ENCODE measurements at regions of chr17 and their contacts with region 1.

Region 1: DNA sequence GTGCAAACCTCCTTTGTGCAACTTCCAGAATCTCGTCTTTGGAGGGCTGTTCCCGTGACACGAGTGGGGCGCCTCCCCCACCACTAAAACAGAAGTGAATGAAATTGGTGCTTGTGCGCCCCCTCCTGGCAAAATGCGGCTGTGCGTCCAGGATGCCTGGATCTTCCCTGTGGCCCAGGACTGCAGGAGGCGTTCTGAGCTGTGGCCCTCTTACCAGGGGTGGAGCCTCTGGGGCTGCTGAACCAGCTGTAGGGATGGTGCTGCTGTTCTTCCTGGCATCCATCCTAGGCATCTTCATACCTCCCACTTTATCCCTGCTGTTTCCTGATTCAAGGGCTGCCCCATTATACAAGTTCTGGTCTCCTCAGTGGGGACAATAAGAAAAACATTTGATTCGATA is 18.5 kb upstream of the NAGLU start:
- DNase-seq: peak; percentile 70
- H3K4me3 Mint-ChIP-seq: no peak overlapping the region
- H3K27ac Mint-ChIP-seq: no peak overlapping the region
- H3K4me1 Mint-ChIP-seq: no peaks in the 10 kb centered on the region
- H3K27me3 Mint-ChIP-seq: peaks cover 4% of the 10 kb centered on the region

Region 2: DNA sequence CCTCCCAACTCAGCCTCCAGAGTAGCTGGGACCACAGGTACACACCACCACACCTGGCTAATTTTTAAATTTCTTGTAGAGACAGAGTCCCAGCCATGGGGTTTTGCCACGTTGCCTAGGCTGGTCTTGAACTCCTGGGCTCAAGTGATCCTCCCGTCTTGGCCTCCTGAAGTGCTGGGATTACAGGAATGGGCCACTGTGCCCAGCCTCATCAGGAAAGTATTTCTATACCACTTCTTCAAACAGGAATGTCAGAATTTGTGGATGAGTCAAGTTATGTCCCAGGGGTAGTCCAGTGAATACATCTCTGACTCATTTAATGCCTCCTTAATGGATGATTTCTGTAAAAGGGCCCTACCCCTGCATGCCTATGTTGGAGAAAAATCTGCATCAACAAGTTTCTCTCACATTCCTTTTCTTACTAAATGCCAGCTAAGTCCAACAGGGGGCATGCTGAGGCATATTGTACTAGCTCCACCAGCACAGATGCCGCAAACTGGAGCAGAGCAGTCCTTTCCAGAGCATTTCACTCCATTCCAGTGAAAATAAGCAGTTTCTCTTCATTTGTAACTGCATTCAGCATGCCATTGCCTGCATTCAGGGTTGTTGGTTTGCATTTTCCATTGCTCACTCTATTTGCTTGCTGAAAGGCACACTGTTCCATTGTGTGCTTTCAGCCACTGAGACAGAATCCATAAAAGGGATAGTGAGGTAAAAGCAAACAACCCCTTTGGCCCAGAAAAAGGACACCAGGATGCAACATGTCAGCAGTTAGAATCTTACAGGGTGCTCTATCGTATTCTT is 89.2 kb before region 1 on chr17:
- intact Hi-C with region 1: loop called (anchors 1 kb)
- DNase-seq: peak; percentile 16
- H3K4me3 Mint-ChIP-seq: no peak overlapping the region
- H3K27ac Mint-ChIP-seq: no peak overlapping the region
- H3K4me1 Mint-ChIP-seq: no peaks in the 10 kb centered on the region
- H3K27me3 Mint-ChIP-seq: peaks cover 50% of the 10 kb centered on the region

Region 3: DNA sequence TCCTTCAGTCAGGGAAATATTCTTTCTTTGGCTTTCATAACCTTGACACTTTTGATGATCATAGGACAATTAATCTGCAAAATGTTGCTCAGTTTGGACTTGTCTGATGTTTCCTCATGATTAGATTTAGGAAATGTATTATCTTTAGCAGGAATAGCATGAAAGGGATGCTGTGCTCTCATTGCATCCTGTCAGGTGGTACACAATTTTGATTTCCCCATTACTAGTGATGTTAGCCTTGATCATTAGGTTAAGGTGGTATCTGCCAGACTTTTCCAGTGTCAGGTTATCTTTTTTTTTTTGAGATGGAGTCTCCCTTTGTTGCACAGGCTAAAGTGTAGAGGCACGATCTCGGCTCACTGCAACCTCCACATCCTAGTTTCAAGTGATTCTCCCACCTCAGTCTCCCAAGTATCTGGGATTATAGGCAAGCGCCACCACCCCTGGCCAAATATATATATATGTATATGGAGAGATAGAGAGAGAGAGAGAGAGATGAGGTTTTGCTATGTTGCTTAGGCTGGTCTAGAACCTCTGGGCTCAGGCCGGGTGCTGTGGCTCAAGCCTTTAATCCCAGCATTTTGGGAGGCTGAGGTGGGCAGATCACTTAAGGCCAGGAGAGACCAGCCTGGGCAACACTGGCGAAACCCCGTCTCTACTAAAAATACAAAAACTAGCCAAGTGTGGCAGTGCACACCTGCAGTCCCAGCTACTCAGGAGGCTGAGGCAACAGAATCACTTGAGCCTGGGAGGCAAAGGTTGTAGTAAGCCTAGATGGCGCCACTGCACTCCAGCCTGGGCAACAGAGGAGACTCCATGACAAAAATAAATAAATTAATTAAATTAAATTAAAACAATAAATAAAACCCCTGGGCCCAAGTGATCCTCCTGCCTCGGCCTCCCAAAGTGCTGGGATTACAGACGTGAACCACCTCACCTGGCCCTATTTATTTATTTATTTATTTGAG is 78.6 kb before region 1 on chr17:
- intact Hi-C with region 1: loop called (anchors 1 kb)
- DNase-seq: peak; percentile 28
- H3K4me3 Mint-ChIP-seq: no peak overlapping the region
- H3K27ac Mint-ChIP-seq: no peak overlapping the region
- H3K4me1 Mint-ChIP-seq: peaks cover 11% of the 10 kb centered on the region
- H3K27me3 Mint-ChIP-seq: peaks cover 6% of the 10 kb centered on the region

Region 4: GRCh38 chr17:42459256-42459800 is 58.2 kb before region 1 on chr17:
- intact Hi-C with region 1: no loop called
- DNase-seq: peak; percentile 5
- H3K4me3 Mint-ChIP-seq: peak overlapping the region; percentile 91
- H3K27ac Mint-ChIP-seq: peak overlapping the region; percentile 93
- H3K4me1 Mint-ChIP-seq: peaks cover 44% of the 10 kb centered on the region
- H3K27me3 Mint-ChIP-seq: peaks cover 10% of the 10 kb centered on the region

Region 5: DNA sequence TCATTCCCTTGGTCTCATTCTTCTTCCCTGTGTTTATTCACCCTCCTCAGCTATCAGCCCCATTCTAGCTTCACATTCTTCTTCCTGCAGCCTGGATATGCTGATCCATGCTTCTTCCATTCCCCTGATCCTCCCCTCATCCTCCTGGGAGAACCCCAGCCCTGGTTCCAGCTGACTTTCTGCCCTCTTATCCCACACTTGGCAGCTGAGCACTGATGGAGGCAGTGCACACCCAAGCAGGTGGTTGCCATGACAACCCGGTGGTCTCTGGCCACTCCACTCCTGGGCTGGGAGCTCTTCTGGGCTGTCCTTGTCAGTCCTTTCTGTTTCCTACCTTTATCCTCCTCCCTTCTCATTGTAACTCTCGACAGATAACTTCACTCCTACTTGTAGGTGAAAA is 124.8 kb after region 1 on chr17:
- intact Hi-C with region 1: no loop called
- DNase-seq: no peak
- H3K4me3 Mint-ChIP-seq: no peak overlapping the region
- H3K27ac Mint-ChIP-seq: no peak overlapping the region
- H3K4me1 Mint-ChIP-seq: no peaks in the 10 kb centered on the region
- H3K27me3 Mint-ChIP-seq: peaks cover 17% of the 10 kb centered on the region